Sciatic nerve (tissue), 2 donors: ENCODE measurements at regions of chr12 and their contacts with region 1.

Region 1: DNA sequence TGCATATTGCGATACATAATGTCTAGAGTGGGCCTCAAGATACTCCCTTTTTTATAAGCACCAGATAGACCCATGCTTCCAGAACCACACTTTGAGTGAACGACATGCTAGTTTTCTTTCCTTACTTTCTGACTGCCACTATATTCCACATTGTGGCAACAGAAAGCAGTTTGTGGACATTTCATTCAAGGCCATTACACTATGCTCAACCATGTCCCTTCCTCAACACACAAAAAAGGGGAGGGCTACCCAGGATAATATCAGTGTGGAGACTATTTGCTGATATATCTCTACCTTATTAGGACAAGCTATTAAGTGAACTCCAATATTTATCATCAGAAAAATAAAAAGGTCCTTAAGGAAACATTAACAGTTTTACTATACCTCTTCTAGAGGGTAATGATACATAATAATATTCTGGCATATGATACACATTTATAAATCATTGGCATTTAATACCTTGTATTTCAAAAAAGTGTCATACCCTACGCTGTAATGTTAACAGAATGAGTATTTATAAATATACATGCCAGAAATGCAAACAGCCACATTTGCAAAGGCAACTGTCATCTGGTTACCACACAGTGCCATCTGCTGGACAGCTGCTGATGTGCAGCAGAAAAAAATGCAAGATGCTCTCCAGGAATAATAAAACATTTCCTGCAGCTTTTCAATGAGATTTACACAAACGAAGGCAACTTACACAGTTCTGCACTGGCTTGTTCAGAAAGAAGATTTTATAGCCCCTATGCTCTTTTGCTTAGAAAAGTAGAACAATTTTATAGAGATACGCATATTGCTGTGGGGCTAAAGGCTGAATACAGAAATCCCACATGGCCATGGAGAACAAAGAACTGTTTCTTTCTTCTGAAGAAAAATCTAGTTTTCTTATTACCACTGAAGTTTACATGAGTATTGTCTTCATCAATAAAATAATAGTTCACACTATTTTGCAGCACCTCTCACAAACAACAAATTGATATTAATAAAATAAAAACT is 182.2 kb upstream of the GRIP1 start:
- DNase-seq: peak; percentile 69
- ATAC-seq: peak; percentile 38

Region 2: GRCh38 chr12:65464930-65465329 is 1396.1 kb before region 1 on chr12:
- intact Hi-C with region 1: loop called (anchors 5 kb)
- DNase-seq: no peak
- ATAC-seq: no peak